GM12878 (cell line): ENCODE measurements at regions of chr1 and their contacts with region 1.

Region 1: GRCh38 chr1:108828022-108828961 is 28.6 kb downstream of the AKNAD1 start:
- DNase-seq: peak; percentile 15
- ATAC-seq: peak; percentile 96
- H3K4me3 ChIP-seq: no peak overlapping the region
- H3K27ac ChIP-seq: no peak overlapping the region
- H3K4me1 ChIP-seq: no peaks in the 10 kb centered on the region
- H3K27me3 ChIP-seq: no peaks in the 10 kb centered on the region
- CTCF ChIP-seq: peak; percentile 67 to 78 (median 71)
- EP300 ChIP-seq: no peak
- POLR2A ChIP-seq: no peak
- RAD21 ChIP-seq: peak; percentile 67

Region 2: GRCh38 chr1:108617008-108617723 is 211.1 kb before region 1 on chr1:
- CTCF ChIA-PET with region 1: no interaction called
- POLR2A ChIA-PET with region 1: no interaction called
- RAD21 ChIA-PET with region 1: no interaction called
- SMC1A ChIA-PET with region 1: no interaction called
- in situ Hi-C with region 1: no loop called
- intact Hi-C with region 1: no loop called
- DNase-seq: no peak
- ATAC-seq: no peak
- H3K4me3 ChIP-seq: no peak overlapping the region
- H3K27ac ChIP-seq: no peak overlapping the region
- H3K4me1 ChIP-seq: no peaks in the 10 kb centered on the region
- H3K27me3 ChIP-seq: no peaks in the 10 kb centered on the region
- CTCF ChIP-seq: no peak
- EP300 ChIP-seq: no peak
- POLR2A ChIP-seq: no peak
- RAD21 ChIP-seq: no peak

Region 3: DNA sequence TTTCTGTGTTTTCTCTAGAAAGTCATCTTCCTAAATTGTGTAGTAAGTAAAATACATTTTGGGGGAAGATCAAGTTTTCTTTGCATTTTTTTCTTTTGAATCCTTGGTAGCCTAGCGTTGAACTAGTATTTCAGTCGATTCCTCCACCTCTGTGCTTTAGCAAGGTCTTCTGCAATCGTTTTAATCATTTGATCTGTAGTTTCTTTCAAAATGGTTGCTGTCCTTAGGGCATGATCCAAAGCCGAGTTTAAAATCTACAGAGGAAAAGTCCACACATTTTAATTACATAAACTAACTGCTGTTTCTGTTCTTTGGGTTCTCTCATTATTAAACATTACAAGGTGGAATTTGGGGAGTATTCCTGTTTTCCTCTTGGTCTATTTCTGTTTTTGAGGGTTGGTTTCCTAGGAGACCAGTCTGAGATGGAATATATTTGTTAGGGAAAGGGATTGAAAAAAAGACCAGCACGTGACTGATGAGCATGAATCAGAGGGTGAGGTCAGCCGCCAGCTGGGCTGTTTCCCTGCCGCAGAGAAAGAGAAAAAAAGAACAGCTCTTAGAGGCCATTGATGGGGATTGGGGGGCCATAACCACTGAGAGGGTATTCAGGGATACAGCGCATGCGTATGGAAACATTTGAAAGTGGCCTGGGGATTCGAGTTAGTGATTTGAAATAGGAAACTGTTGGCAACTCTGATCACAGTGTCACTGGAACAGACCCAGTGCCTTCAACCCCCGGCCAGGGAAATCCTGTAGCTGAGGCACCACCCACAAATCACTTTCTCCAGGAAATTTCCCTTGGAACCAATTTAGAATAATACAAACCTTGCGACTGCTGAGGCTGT is 12.0 kb before region 1 on chr1:
- CTCF ChIA-PET with region 1: interaction called, 14 read pairs
- POLR2A ChIA-PET with region 1: interaction called, 4 read pairs
- RAD21 ChIA-PET with region 1: interaction called, 3 read pairs
- SMC1A ChIA-PET with region 1: interaction called, 6 read pairs
- in situ Hi-C with region 1: no loop called
- intact Hi-C with region 1: no loop called
- DNase-seq: no peak
- ATAC-seq: no peak
- H3K4me3 ChIP-seq: no peak overlapping the region
- H3K27ac ChIP-seq: no peak overlapping the region
- H3K4me1 ChIP-seq: no peaks in the 10 kb centered on the region
- H3K27me3 ChIP-seq: no peaks in the 10 kb centered on the region
- CTCF ChIP-seq: no peak
- EP300 ChIP-seq: no peak
- POLR2A ChIP-seq: no peak
- RAD21 ChIP-seq: no peak

Region 4: DNA sequence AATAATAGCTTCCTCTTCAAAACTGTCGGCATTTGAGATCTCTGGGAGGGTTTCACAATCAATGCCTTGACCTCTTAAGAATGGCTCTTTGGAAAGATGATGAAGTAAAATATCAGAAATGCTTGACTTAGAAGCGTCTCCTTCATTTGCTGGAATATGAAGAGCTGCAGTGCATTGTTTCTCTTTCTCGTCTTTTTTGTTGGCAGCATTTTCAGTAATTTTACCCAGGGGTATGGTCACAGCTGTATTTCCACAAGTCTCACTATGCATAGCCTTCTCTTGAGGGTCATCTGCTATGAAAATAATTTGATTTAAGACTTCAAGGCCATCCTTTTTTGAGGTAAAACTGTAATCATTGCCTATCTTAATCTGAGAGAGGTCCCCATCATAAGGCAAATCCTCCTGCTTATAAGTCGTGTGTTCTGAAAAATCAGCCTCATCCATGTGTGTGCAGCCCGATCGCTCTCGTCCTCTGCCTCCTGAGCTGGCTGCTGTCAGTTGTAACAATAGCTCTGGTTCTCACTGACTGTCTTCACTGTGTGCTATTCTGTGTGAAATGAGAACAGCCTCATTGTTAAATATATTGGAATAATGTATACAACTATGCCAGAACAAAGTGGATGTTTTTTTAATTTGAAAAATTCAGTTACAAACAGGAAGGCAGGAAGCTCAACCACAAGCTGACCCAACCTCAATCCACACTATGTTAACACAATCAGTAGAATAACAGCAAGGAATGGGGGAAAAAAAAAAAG is 24.1 kb after region 1 on chr1:
- CTCF ChIA-PET with region 1: interaction called, 10 read pairs
- POLR2A ChIA-PET with region 1: no interaction called
- RAD21 ChIA-PET with region 1: no interaction called
- SMC1A ChIA-PET with region 1: interaction called, 4 read pairs
- in situ Hi-C with region 1: no loop called
- intact Hi-C with region 1: no loop called
- DNase-seq: no peak
- ATAC-seq: no peak
- H3K4me3 ChIP-seq: no peak overlapping the region
- H3K27ac ChIP-seq: no peak overlapping the region
- H3K4me1 ChIP-seq: no peaks in the 10 kb centered on the region
- H3K27me3 ChIP-seq: no peaks in the 10 kb centered on the region; a peak in 2 of 4 replicates
- CTCF ChIP-seq: no peak
- EP300 ChIP-seq: no peak
- POLR2A ChIP-seq: no peak
- RAD21 ChIP-seq: no peak

Region 5: DNA sequence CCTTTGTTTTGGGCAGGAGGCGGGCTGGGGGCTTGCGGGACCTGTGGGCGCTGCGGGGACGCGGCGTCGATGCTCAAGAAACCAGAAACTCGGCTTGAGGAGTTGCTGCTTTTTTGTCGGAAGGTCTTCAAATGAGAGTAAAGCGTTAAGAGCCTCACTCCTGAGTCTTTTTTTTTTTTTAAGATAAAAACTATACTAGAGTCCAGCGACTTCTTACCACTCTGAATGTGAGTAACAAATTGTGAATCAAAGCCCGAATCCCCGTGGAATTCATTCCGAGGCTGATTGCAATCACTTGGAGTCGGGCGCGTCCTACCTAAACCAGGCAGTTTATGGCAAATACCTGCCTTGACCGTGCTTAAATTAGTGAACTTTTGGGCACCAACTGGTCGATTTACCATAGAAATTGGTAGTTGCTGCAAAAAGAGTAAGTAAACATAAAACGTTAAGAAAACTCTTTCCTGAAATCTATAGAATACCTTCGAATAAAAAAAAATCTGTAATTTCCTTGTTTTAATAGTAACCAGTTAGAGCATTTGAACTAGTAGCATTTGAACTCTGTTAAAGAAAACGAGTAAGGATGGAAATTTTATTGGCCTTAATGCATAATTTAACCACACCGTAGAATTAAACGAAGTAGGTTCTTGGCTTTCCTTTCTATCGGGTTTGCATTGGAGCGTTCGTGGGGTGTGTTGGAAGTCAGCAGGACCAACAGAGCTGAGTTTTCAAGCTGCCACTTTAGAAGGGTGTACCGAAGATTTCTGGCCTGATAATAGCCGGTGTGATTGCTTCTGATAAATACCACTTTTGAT is 49.3 kb after region 1 on chr1:
- CTCF ChIA-PET with region 1: interaction called, 35 read pairs
- POLR2A ChIA-PET with region 1: no interaction called
- RAD21 ChIA-PET with region 1: interaction called, 4 read pairs
- SMC1A ChIA-PET with region 1: interaction called, 4 read pairs
- in situ Hi-C with region 1: no loop called
- intact Hi-C with region 1: loop called (anchors 5 kb)
- DNase-seq: no peak
- ATAC-seq: peak; percentile 7; the same call in 2 of the 3 replicates
- H3K4me3 ChIP-seq: peak overlapping the region; percentile 73
- H3K27ac ChIP-seq: peak overlapping the region; percentile 61
- H3K4me1 ChIP-seq: no peaks in the 10 kb centered on the region
- H3K27me3 ChIP-seq: no peaks in the 10 kb centered on the region
- CTCF ChIP-seq: no peak
- EP300 ChIP-seq: no peak
- POLR2A ChIP-seq: no peak
- RAD21 ChIP-seq: no peak

Region 6: GRCh38 chr1:108892356-108893140 is 64.3 kb after region 1 on chr1:
- CTCF ChIA-PET with region 1: interaction called, 323 read pairs
- POLR2A ChIA-PET with region 1: interaction called, 3 read pairs
- RAD21 ChIA-PET with region 1: interaction called, 92 read pairs
- SMC1A ChIA-PET with region 1: interaction called, 118 read pairs
- in situ Hi-C with region 1: loop called (anchors 10 kb)
- intact Hi-C with region 1: no loop called
- DNase-seq: no peak
- ATAC-seq: no peak
- H3K4me3 ChIP-seq: no peak overlapping the region
- H3K27ac ChIP-seq: no peak overlapping the region
- H3K4me1 ChIP-seq: no peaks in the 10 kb centered on the region
- H3K27me3 ChIP-seq: no peaks in the 10 kb centered on the region
- CTCF ChIP-seq: no peak
- EP300 ChIP-seq: no peak
- POLR2A ChIP-seq: no peak
- RAD21 ChIP-seq: no peak

Region 7: GRCh38 chr1:109061183-109061582 is 232.9 kb after region 1 on chr1:
- CTCF ChIA-PET with region 1: no interaction called
- POLR2A ChIA-PET with region 1: no interaction called
- RAD21 ChIA-PET with region 1: no interaction called
- SMC1A ChIA-PET with region 1: no interaction called
- in situ Hi-C with region 1: no loop called
- intact Hi-C with region 1: no loop called
- DNase-seq: no peak
- ATAC-seq: no peak
- H3K4me3 ChIP-seq: no peak overlapping the region
- H3K27ac ChIP-seq: no peak overlapping the region
- H3K4me1 ChIP-seq: no peaks in the 10 kb centered on the region
- H3K27me3 ChIP-seq: no peaks in the 10 kb centered on the region
- CTCF ChIP-seq: no peak
- EP300 ChIP-seq: no peak
- POLR2A ChIP-seq: no peak
- RAD21 ChIP-seq: no peak